PC-3 (cell line): ENCODE measurements at regions of chr7 and their contacts with region 1.

Region 1: DNA sequence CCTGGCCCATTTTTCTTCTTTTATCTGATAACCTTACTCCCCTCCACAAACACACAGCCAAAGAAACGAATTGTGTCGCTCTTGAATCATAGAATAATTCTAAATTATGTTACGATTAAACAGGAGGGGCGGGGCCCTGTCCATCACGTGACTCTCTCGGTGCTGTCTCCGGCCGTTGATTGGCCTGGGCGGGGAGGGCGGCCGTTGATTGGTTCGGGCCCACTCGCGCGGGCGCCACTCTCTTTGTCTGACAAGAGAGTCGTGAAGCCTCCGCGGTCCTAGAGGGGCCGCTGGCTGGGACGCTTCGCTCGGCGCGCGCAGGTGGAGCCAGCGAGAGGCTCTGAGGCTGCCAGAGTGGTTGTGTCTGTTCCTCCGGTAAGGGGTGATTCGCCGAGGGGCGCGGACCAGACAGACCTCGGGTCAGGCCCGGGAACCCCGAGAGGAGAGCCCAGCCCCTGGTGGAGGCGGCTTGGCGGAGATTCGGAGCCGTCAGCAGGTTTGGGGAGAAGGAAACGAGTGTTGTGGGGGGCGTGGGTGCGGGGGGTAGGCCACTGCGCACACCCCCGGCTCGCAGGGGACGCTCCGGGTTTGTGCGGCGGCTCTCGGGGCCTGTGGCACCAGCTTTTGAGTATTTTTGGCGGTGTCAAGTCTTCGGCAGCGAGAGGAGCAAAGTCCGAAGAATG is at the start of gene ZNF789:
- DNase-seq: peak; percentile 95
- ATAC-seq: peak; percentile 97
- H3K4me3 ChIP-seq: peak within 1 kb of the TSS; percentile 83
- H3K27ac ChIP-seq: peak within 1 kb of the TSS; percentile 83
- H3K4me1 ChIP-seq: peaks cover 5% of the 10 kb centered on the region; the same call in 1 of the 2 replicates
- H3K27me3 ChIP-seq: no peaks in the 10 kb centered on the region
- CTCF ChIP-seq: no peak
- total RNA-seq, gene ZNF789: 6.6 and 8.3 TPM in 2 replicates

Region 2: GRCh38 chr7:99433158-99433557 is 39.5 kb before region 1 on chr7:
- CTCF ChIA-PET with region 1: no interaction called
- POLR2A ChIA-PET with region 1: interaction called, 19 read pairs
- intact Hi-C with region 1: no loop called
- DNase-seq: no peak
- ATAC-seq: no peak
- H3K4me3 ChIP-seq: no peak overlapping the region
- H3K27ac ChIP-seq: no peak overlapping the region
- H3K4me1 ChIP-seq: peaks cover 6% of the 10 kb centered on the region
- H3K27me3 ChIP-seq: no peaks in the 10 kb centered on the region
- CTCF ChIP-seq: no peak

Region 3: GRCh38 chr7:99504603-99505323 is 32.1 kb after region 1 on chr7 and contains the start of gene ZKSCAN5:
- CTCF ChIA-PET with region 1: no interaction called
- POLR2A ChIA-PET with region 1: no interaction called
- intact Hi-C with region 1: loop called (anchors 2 kb)
- DNase-seq: peak; percentile 85
- ATAC-seq: peak; percentile 81
- H3K4me3 ChIP-seq: peak within 1 kb of the TSS; percentile 84
- H3K27ac ChIP-seq: peak within 1 kb of the TSS; percentile 39
- H3K4me1 ChIP-seq: 0 out of 2 replicates have a peak, but pooled peaks cover 5% of the 10 kb centered on the region
- H3K27me3 ChIP-seq: no peaks in the 10 kb centered on the region
- CTCF ChIP-seq: no peak
- total RNA-seq, gene ZKSCAN5: 8.6 and 9.9 TPM in 2 replicates

Region 4: GRCh38 chr7:99938296-99938695 is 465.6 kb after region 1 on chr7:
- CTCF ChIA-PET with region 1: no interaction called
- POLR2A ChIA-PET with region 1: no interaction called
- intact Hi-C with region 1: no loop called
- DNase-seq: no peak
- ATAC-seq: no peak
- H3K4me3 ChIP-seq: no peak overlapping the region
- H3K27ac ChIP-seq: no peak overlapping the region
- H3K4me1 ChIP-seq: no peaks in the 10 kb centered on the region
- H3K27me3 ChIP-seq: peaks cover 43% of the 10 kb centered on the region
- CTCF ChIP-seq: no peak